PC-3 (cell line): ENCODE measurements at regions of chr5 and their contacts with region 1.

Region 1: DNA sequence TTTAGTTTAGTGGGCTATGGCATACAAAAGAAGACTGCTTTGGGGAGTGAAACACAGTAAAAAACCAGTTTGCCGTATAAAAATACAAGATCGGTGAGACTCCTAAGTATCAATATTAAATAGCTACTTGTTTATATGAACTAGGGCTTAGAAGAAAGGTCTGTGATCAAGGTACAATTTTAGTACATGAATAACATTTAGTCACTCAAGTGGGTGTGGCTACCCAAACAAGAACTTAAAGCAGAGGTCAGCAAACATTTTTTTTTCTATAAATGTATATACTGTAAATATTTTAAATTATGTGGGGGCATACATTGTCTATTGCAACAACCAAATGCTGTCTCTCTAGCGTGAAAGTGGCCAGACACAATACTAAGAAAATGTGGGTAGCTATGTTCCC is 1452.5 kb upstream of the NUDT12 start:
- DNase-seq: peak; percentile 60
- ATAC-seq: peak; percentile 73
- H3K4me3 ChIP-seq: no peak overlapping the region
- H3K27ac ChIP-seq: no peak overlapping the region
- H3K4me1 ChIP-seq: peaks cover 5% of the 10 kb centered on the region
- H3K27me3 ChIP-seq: no peaks in the 10 kb centered on the region
- CTCF ChIP-seq: no peak

Region 2: DNA sequence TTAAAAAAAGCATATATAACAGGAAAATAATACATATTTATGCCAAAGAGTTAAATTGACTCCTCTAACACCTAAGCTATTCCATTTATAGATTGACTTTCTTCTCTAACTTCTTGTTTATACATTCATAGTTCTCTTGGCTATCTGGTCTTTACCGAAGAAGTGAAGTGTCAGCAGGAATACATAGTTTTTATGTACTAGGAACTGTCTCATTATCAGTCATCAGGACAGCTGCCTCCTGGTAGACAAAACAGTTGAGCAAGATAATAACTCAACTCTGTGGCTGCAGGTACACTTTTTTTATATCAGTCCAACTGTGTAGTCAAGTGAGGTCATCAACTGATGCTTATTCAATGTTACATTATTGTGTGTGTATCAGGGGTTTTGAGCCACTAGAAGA is 16.5 kb before region 1 on chr5:
- CTCF ChIA-PET with region 1: no interaction called
- POLR2A ChIA-PET with region 1: no interaction called
- intact Hi-C with region 1: no loop called
- DNase-seq: peak; percentile 65
- ATAC-seq: peak; percentile 60
- H3K4me3 ChIP-seq: no peak overlapping the region
- H3K27ac ChIP-seq: peak overlapping the region; percentile 80
- H3K4me1 ChIP-seq: peaks cover 18% of the 10 kb centered on the region
- H3K27me3 ChIP-seq: no peaks in the 10 kb centered on the region
- CTCF ChIP-seq: no peak

Region 3: DNA sequence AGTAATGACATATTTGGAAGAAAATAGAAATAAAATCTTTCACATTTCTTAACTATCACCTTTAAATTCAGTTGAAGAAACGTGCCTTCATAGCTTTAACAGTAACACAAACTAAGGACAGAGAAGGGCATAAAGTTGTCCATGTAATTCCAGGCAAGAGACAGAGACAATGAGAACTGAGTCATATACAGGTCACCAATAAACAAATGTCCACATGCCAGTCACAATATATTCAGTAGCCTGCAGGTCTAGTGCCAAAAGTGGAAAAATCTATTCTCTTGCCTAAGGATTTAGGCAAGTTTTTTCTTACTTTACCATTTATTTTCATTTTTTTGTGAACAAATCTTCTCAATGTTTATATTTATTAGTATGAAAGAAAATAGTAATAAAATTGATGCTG is 259.0 kb after region 1 on chr5:
- CTCF ChIA-PET with region 1: no interaction called
- POLR2A ChIA-PET with region 1: no interaction called
- intact Hi-C with region 1: loop called (anchors 10 kb)
- DNase-seq: peak; percentile 59
- ATAC-seq: peak; percentile 96
- H3K4me3 ChIP-seq: no peak overlapping the region
- H3K27ac ChIP-seq: no peak overlapping the region
- H3K4me1 ChIP-seq: no peaks in the 10 kb centered on the region; the same call in 1 of the 2 replicates
- H3K27me3 ChIP-seq: no peaks in the 10 kb centered on the region
- CTCF ChIP-seq: no peak